ENCODE measurements at regions of chr14 and their contacts with region 1.

Region 1: DNA sequence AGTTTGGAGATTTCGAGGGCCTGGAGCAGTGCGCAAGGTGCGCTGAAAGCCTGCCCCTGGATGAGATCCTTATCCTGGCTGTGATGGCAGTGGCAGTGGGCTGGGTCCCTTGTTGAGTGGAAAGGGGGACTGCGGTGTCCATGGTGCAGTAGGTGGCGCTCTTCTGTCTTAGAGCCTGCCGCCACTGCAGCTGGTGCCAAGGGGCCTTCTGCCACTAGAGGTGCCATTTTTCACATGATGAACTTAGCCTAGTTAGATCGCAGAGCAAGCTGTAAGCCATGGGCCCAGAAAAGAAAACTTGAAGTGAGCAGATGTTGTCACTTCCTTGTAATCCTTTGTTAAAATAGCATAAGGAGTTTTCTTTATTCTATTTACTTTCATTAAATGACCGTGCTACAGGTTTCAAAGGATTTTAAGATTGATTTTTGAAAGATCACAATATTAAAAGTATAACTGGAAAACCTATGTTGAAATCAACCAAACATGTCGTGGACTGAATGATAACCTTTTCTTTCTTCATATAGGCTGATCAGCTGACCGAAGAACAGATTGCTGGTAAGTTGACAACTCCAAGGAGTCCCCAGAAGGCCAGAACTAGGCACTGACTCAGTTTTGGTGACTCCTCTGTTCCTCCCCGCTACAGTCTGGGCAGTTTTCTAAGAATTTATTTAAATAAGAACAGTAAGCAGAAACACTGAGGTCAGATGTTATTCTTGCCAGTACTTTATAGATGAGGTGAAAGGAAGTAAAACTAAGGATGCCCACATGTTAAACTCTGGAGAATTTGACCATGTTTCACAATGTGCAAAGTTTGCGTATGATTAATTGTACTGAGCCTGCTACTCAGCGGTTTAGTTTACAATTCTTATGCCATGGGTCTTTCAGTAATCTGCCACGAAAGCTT is 3.0 kb downstream of the CALM1 start:
- DNase-seq: peak; percentile 93 to 95
- H3K4me3 ChIP-seq: peak overlapping the region; percentile 74 to 92
- H3K27ac ChIP-seq: peak overlapping the region; percentile 96 to 97
- H3K4me1 ChIP-seq: peaks cover 0 to 70% (median 37%) of the 10 kb centered on the region in 4 donors
- H3K27me3 ChIP-seq: no peaks in the 10 kb centered on the region
- CTCF ChIP-seq: peak; percentile 98

Region 2: GRCh38 chr14:90301668-90302090 is 98.1 kb before region 1 on chr14:
- intact Hi-C with region 1: loop called (anchors 10 kb)
- DNase-seq: no peak
- H3K4me3 ChIP-seq: no peak overlapping the region
- H3K27ac ChIP-seq: peak overlapping the region; percentile 65 to 70
- H3K4me1 ChIP-seq: peaks cover 0 to 25% (median 10%) of the 10 kb centered on the region in 4 donors
- H3K27me3 ChIP-seq: no peaks in the 10 kb centered on the region
- CTCF ChIP-seq: peak; percentile 51 to 54

Region 3: GRCh38 chr14:90382653-90383074 is 17.1 kb before region 1 on chr14:
- intact Hi-C with region 1: loop called (anchors 1 kb)
- DNase-seq: peak; percentile 74 to 87
- H3K4me3 ChIP-seq: peak overlapping the region; percentile 66 to 73
- H3K27ac ChIP-seq: peak overlapping the region; percentile 99 to 100
- H3K4me1 ChIP-seq: peaks cover 0 to 29% (median 14%) of the 10 kb centered on the region in 4 donors
- H3K27me3 ChIP-seq: no peaks in the 10 kb centered on the region
- CTCF ChIP-seq: no peak

Region 4: GRCh38 chr14:90522571-90523191 is 122.9 kb after region 1 on chr14:
- intact Hi-C with region 1: loop called (anchors 5 kb)
- DNase-seq: peak; percentile 59 to 93
- H3K4me3 ChIP-seq: peak overlapping the region in 1 of 2 donors; percentile 14
- H3K27ac ChIP-seq: peak overlapping the region; percentile 74 to 76
- H3K4me1 ChIP-seq: peaks cover 6 to 66% (median 52%) of the 10 kb centered on the region in 4 donors
- H3K27me3 ChIP-seq: no peaks in the 10 kb centered on the region
- CTCF ChIP-seq: no peak

Region 5: DNA sequence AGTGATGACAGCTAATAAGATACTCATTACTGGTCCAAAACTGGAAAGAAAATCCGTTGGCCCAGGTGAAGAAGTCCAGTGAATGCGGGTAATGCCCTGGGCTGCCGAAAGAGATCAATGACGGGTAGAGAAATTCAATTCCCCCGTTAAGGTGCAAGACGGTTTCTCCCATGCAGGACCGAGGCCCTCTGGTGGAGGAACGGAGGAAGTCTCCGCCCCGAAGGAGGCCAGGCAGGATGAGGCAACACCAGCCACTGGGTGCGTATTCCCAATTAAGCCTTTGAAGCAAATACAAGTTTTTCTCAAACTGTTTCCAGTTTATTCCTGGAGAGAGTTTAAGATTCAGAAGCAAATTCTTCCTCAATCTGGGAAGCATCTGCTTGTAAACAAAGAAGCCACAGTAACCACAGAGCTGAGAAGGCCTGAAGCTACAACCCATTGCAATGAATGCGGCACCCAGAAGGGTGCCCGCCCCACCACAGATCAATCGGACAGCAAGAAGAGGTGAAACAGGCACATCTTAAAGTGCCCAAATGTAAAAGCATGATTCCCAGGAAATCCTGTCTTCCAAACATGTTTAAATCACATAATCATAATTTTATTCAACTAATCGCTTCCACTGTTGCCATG is 297.9 kb after region 1 on chr14:
- intact Hi-C with region 1: loop called (anchors 2 kb)
- DNase-seq: peak; percentile 86 to 92
- H3K4me3 ChIP-seq: no peak overlapping the region
- H3K27ac ChIP-seq: peak overlapping the region; percentile 79
- H3K4me1 ChIP-seq: peaks cover 0 to 33% (median 25%) of the 10 kb centered on the region in 4 donors
- H3K27me3 ChIP-seq: no peaks in the 10 kb centered on the region
- CTCF ChIP-seq: peak; percentile 95 to 96

Region 6: DNA sequence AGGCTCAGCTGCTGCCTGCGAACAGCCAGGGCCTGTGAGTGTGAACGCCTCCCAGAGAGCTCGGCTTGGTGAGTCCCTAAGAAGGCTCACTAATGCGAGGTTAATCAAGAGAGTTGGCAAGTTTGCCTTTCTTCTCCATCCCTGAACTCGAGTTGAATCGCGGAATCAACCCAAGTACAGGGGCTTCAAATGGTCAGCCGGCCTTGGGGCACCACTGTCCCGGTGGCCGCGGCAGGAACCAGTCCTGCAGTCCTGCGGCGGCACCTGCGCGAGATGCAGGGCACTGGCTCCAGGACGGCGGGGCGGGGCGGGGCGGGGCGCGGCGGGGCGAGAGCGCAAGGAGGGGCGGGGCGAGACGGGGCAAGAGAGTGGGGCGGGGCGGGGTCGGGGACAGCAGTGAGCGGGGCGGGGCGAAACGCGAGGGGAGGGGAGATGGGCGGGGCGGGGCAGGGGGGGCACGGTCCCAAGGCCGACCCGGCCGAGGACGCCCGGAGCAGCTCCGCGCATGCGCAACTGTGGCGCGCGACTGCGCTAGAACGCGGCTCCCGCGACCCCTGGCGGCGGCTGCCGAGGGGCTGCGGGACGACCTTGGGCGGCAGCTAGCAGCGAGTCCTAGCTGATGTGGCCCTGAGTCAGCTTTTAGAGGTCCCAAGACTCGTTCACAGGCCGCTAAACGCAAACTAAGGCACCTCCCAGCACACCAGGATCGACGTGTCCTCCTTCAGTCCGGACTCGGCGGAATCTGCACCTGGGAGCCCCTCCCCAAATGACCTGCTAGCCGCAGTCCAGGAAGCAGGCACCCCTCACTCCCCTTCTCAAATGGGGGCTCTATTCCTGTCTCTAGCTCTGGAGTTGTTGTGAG is 358.5 kb after region 1 on chr14:
- intact Hi-C with region 1: loop called (anchors 5 kb)
- DNase-seq: peak; percentile 88 to 96
- H3K4me3 ChIP-seq: peak overlapping the region; percentile 48 to 59
- H3K27ac ChIP-seq: peak overlapping the region; percentile 88 to 94
- H3K4me1 ChIP-seq: peaks cover 0 to 35% (median 18%) of the 10 kb centered on the region in 4 donors
- H3K27me3 ChIP-seq: no peaks in the 10 kb centered on the region
- CTCF ChIP-seq: peak; percentile 85 to 94

Region 7: GRCh38 chr14:90815822-90816700 is 416.3 kb after region 1 on chr14 and contains the start of gene TTC7B:
- intact Hi-C with region 1: loop called (anchors 10 kb)
- DNase-seq: no peak
- H3K4me3 ChIP-seq: peak within 1 kb of the TSS; percentile 61 to 83
- H3K27ac ChIP-seq: peak within 1 kb of the TSS; percentile 52 to 59
- H3K4me1 ChIP-seq: peaks cover 0 to 20% (median 12%) of the 10 kb centered on the region in 4 donors
- H3K27me3 ChIP-seq: no peaks in the 10 kb centered on the region
- CTCF ChIP-seq: peak in 1 of 2 experiments; percentile 34